ENCODE measurements at regions of chr4 and their contacts with region 1.

Region 1: DNA sequence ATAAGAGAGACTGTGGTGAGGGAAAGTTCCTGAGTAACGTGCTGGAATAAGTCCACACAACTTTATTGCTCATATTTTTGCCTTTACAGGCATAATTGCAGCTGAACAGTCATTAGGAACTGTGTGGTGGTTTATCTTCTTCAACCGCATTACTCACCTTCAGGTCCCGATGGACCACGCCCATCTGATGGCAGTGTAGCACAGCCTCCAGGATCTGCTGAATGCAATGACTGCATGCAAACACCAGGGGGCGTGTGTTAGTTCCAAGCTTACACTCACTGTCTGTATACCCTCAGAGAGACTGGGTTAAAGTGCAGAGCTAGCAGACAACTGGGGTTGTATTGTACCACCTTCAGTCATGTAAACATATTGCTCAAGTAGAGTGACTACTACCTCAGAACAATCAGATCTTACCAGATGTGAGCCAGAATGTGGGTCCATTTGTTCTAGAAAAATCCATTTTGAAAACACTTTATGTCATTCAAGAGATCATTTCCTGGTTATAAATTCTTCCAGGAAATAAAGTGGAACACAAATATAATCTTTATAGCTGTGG is 214.0 kb downstream of the CAMK2D start:
- DNase-seq: peak; percentile 92 to 93
- H3K4me3 ChIP-seq: no peak overlapping the region
- H3K4me3 Mint-ChIP-seq: no peak overlapping the region
- H3K27ac Mint-ChIP-seq: no peak overlapping the region
- H3K4me1 ChIP-seq: peaks cover 9% of the 10 kb centered on the region; the same call in 1 of the 2 replicates
- H3K4me1 Mint-ChIP-seq: no peaks in the 10 kb centered on the region
- H3K27me3 ChIP-seq: no peaks in the 10 kb centered on the region
- H3K27me3 Mint-ChIP-seq: no peaks in the 10 kb centered on the region
- CTCF ChIP-seq: peak; percentile 91 to 93

Region 2: DNA sequence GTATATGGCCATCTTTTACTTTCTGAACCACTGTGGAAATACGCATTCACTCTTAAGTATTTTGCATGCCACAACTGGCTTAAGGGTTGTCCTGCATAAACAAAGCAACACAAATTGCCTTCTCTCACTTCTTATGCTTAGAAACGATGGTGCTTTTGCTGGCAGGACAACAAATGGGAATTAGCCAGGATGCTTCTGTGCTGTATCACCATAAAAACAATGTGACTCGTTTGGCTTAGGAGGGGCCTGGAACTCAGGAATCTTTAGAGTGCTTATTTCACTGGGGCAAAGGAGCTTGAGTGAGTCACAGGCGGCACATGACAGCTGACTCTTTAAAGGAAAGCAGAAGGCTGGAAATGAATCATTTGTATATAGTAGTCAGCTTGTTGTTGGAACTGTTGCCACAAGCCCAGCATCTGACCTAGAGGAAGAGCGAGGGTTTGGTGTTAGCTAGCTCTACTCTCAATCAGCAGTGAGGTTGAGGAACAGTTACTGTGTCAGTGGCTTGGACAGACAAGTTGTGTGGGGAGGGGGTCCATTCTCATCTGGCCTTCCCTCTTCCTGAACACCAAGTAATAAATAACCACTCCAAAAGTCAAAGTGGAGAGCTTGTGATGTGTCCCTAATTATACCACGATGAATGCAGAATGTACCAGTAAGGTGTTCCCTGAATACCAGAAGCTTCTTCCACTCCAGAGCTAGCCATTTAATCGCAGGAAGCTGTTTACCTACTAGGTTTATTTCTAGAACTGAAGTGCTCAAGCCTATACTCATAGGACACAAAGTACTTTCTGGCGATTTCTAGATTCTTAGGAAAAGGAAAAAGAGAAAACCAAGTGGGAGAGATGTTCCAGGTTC is 79.2 kb before region 1 on chr4:
- CTCF ChIA-PET with region 1: no interaction called
- POLR2A ChIA-PET with region 1: no interaction called
- intact Hi-C with region 1: no loop called
- DNase-seq: peak; percentile 37 to 51
- H3K4me3 ChIP-seq: no peak overlapping the region
- H3K4me3 Mint-ChIP-seq: no peak overlapping the region
- H3K27ac Mint-ChIP-seq: peak overlapping the region; percentile 66
- H3K4me1 ChIP-seq: peaks cover 38% of the 10 kb centered on the region
- H3K4me1 Mint-ChIP-seq: peaks cover 33% of the 10 kb centered on the region
- H3K27me3 ChIP-seq: no peaks in the 10 kb centered on the region
- H3K27me3 Mint-ChIP-seq: no peaks in the 10 kb centered on the region
- CTCF ChIP-seq: no peak

Region 3: GRCh38 chr4:113593400-113594230 is 46.0 kb after region 1 on chr4:
- CTCF ChIA-PET with region 1: no interaction called
- POLR2A ChIA-PET with region 1: no interaction called
- intact Hi-C with region 1: no loop called
- DNase-seq: no peak
- H3K4me3 ChIP-seq: no peak overlapping the region
- H3K4me3 Mint-ChIP-seq: no peak overlapping the region
- H3K27ac Mint-ChIP-seq: no peak overlapping the region
- H3K4me1 ChIP-seq: no peaks in the 10 kb centered on the region
- H3K4me1 Mint-ChIP-seq: peaks cover 11% of the 10 kb centered on the region
- H3K27me3 ChIP-seq: no peaks in the 10 kb centered on the region
- H3K27me3 Mint-ChIP-seq: no peaks in the 10 kb centered on the region
- CTCF ChIP-seq: no peak

Region 4: DNA sequence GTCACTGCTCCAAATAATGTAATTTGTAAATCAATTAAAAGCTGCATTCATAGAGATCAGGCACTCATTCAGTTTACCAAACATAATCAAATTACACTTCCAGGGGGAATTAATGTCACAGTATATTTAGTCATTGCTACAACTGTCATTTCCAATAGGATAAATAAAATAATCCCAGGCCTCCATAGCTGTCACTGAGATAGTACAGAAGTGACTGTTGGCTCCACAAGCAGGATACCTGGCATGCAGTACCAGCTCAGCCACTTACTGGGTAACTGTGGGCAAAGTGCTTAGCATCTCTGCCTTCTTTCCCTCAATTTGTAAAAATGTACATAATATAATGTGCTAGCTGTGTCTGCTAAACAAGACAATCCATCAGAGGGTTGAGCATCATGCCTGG is 85.9 kb after region 1 on chr4:
- CTCF ChIA-PET with region 1: no interaction called
- POLR2A ChIA-PET with region 1: no interaction called
- intact Hi-C with region 1: no loop called
- DNase-seq: no peak
- H3K4me3 ChIP-seq: no peak overlapping the region
- H3K4me3 Mint-ChIP-seq: no peak overlapping the region
- H3K27ac Mint-ChIP-seq: no peak overlapping the region
- H3K4me1 ChIP-seq: peaks cover 8% of the 10 kb centered on the region
- H3K4me1 Mint-ChIP-seq: peaks cover 28% of the 10 kb centered on the region
- H3K27me3 ChIP-seq: no peaks in the 10 kb centered on the region
- H3K27me3 Mint-ChIP-seq: no peaks in the 10 kb centered on the region
- CTCF ChIP-seq: no peak

Region 5: DNA sequence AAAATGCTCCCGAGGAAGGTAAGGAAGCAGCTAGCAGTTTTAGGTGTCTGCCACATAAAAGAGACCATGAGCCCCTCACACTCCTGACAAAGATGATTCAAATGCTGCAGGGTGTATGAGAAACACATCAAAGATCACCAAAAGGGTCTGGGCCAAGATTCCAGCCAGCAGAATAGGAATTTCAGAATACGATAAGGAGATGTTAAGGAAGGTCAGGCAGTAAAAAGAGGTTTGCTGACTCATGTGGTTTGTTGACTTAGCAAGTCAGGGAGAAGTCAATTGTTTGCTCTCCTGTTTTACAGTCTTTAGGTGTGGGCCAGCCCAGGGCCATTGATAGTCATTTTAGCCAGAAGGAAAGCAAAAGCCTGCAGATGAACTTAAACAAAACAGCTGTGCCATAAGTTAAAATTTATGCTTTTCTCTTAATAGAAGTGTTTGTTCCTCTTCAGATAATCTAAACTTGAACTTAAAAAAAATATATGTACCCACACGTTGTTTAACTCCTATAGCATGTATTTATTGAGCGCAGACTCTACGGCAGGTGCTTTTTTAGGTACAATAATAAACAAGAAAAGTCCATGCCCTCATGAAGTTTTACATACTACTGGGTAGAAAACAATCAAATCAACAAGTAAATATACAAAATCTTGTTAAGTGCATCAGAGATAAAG is 98.3 kb after region 1 on chr4:
- CTCF ChIA-PET with region 1: interaction called, 4 read pairs
- POLR2A ChIA-PET with region 1: no interaction called
- intact Hi-C with region 1: loop called (anchors 10 kb)
- DNase-seq: peak; percentile 79 to 83
- H3K4me3 ChIP-seq: no peak overlapping the region
- H3K4me3 Mint-ChIP-seq: peak overlapping the region; percentile 54
- H3K27ac Mint-ChIP-seq: peak overlapping the region; percentile 92
- H3K4me1 ChIP-seq: peaks cover 70% of the 10 kb centered on the region
- H3K4me1 Mint-ChIP-seq: peaks cover 49% of the 10 kb centered on the region
- H3K27me3 ChIP-seq: no peaks in the 10 kb centered on the region
- H3K27me3 Mint-ChIP-seq: no peaks in the 10 kb centered on the region
- CTCF ChIP-seq: no peak

Region 6: GRCh38 chr4:113673450-113673849 is 125.9 kb after region 1 on chr4:
- CTCF ChIA-PET with region 1: interaction called, 4 read pairs
- POLR2A ChIA-PET with region 1: no interaction called
- intact Hi-C with region 1: loop called (anchors 1 kb)
- DNase-seq: peak; percentile 39 to 53
- H3K4me3 ChIP-seq: no peak overlapping the region
- H3K4me3 Mint-ChIP-seq: no peak overlapping the region
- H3K27ac Mint-ChIP-seq: no peak overlapping the region
- H3K4me1 ChIP-seq: peaks cover 13% of the 10 kb centered on the region; the same call in 1 of the 2 replicates
- H3K4me1 Mint-ChIP-seq: peaks cover 8% of the 10 kb centered on the region
- H3K27me3 ChIP-seq: no peaks in the 10 kb centered on the region
- H3K27me3 Mint-ChIP-seq: no peaks in the 10 kb centered on the region
- CTCF ChIP-seq: no peak

Region 7: GRCh38 chr4:113684534-113685091 is 137.0 kb after region 1 on chr4:
- CTCF ChIA-PET with region 1: interaction called, 23 read pairs
- POLR2A ChIA-PET with region 1: no interaction called
- intact Hi-C with region 1: loop called (anchors 1 kb)
- DNase-seq: peak; percentile 76 to 89
- H3K4me3 ChIP-seq: no peak overlapping the region
- H3K4me3 Mint-ChIP-seq: no peak overlapping the region
- H3K27ac Mint-ChIP-seq: no peak overlapping the region
- H3K4me1 ChIP-seq: peaks cover 52% of the 10 kb centered on the region
- H3K4me1 Mint-ChIP-seq: peaks cover 47% of the 10 kb centered on the region
- H3K27me3 ChIP-seq: no peaks in the 10 kb centered on the region
- H3K27me3 Mint-ChIP-seq: no peaks in the 10 kb centered on the region
- CTCF ChIP-seq: peak; percentile 31 to 46

Region 8: GRCh38 chr4:113869743-113870375 is 322.3 kb after region 1 on chr4:
- CTCF ChIA-PET with region 1: no interaction called
- POLR2A ChIA-PET with region 1: no interaction called
- intact Hi-C with region 1: loop called (anchors 1 kb)
- DNase-seq: no peak
- H3K4me3 ChIP-seq: no peak overlapping the region
- H3K4me3 Mint-ChIP-seq: no peak overlapping the region
- H3K27ac Mint-ChIP-seq: no peak overlapping the region
- H3K4me1 ChIP-seq: no peaks in the 10 kb centered on the region
- H3K4me1 Mint-ChIP-seq: no peaks in the 10 kb centered on the region
- H3K27me3 ChIP-seq: no peaks in the 10 kb centered on the region
- H3K27me3 Mint-ChIP-seq: no peaks in the 10 kb centered on the region
- CTCF ChIP-seq: no peak